ENCODE measurements at regions of chr1 and their contacts with region 1.

Region 1: GRCh38 chr1:7885513-7886404 is 32.9 kb upstream of the UTS2 start:
- DNase-seq: peak; percentile 56
- H3K4me3 ChIP-seq: no peak overlapping the region
- H3K27ac ChIP-seq: no peak overlapping the region
- H3K4me1 ChIP-seq: peaks cover 6% of the 10 kb centered on the region
- H3K27me3 ChIP-seq: no peaks in the 10 kb centered on the region
- CTCF ChIP-seq: no peak

Region 2: GRCh38 chr1:7229696-7230631 is 655.8 kb before region 1 on chr1:
- CTCF ChIA-PET with region 1: interaction called, 14 read pairs
- dilution Hi-C with region 1: no loop called
- in situ Hi-C with region 1: no loop called
- intact Hi-C with region 1: no loop called
- DNase-seq: no peak
- H3K4me3 ChIP-seq: no peak overlapping the region
- H3K27ac ChIP-seq: no peak overlapping the region
- H3K4me1 ChIP-seq: no peaks in the 10 kb centered on the region
- H3K27me3 ChIP-seq: no peaks in the 10 kb centered on the region
- CTCF ChIP-seq: no peak

Region 3: DNA sequence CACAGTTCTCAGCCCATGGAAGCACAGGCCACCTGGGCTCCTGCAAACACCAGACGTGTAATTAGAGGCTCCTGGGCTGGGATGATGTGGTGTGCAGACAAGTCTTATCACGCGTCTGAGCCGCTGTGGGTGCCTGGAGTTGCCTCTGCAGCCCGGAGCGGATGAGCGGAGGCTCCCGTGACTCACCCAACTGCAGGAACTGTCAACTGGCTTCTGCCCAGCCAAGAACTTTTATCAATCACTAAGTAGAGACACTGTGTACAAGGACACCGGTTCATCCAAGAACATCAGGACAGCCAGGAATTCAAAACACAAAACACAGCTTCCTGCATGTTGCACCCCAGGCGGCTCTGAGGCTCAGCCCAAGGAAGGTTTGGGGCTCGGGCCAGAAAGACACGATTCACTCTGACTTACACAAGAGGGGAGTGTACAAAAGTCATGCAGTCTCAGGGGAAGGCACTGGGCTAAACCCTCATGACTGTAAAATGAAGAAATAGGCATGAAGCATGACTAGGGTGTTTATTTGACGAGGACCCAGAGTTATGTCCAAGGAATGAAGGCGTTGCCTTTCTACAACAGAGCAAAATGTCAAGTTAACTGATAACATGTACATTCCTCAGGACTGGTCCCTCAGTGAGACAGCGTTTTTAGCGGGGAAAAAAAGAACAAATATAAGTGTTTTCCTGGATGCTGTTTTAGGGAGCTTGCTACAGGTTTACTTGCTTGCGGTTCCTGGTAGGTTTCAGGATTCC is 119.2 kb after region 1 on chr1:
- CTCF ChIA-PET with region 1: no interaction called
- dilution Hi-C with region 1: no loop called
- in situ Hi-C with region 1: no loop called
- intact Hi-C with region 1: no loop called
- DNase-seq: peak; percentile 99
- H3K4me3 ChIP-seq: no peak overlapping the region
- H3K27ac ChIP-seq: peak overlapping the region; percentile 91
- H3K4me1 ChIP-seq: peaks cover 39% of the 10 kb centered on the region
- H3K27me3 ChIP-seq: no peaks in the 10 kb centered on the region
- CTCF ChIP-seq: no peak